Activated B cell treated with CpG ODN at 0.5 μM for 24 hours (primary cell): ENCODE measurements at regions of chr3 and their contacts with region 1.

Region 1: GRCh38 chr3:154095832-154096421 is 25.3 kb upstream of the ARHGEF26 start:
- DNase-seq: no peak
- ATAC-seq: no peak
- H3K4me3 Mint-ChIP-seq: no peak overlapping the region
- H3K27ac Mint-ChIP-seq: no peak overlapping the region
- H3K4me1 Mint-ChIP-seq: no peaks in the 10 kb centered on the region
- H3K27me3 Mint-ChIP-seq: no peaks in the 10 kb centered on the region
- CTCF ChIP-seq: no peak

Region 2: DNA sequence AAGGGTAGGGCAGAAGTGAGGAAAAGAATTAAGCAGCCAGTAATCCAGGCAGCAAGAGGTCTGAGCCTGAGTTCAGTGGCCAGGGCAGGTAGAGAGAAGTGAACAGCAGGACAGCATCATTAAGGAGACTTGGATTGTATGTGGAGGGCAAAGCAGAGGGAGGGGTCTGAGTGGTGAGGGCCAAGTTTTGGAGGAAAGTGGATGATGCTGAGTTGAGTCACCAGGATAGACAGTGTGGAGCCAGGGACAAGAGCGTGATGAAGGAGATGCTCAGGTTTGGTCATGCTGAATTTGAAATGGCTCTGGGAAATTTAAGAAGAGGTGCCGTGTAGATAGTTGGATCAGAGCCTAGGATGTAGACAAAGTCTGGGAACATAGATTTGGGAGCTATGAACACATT is 118.4 kb after region 1 on chr3:
- CTCF ChIA-PET with region 1: no interaction called
- POLR2A ChIA-PET with region 1: no interaction called
- intact Hi-C with region 1: no loop called
- DNase-seq: no peak
- ATAC-seq: no peak
- H3K4me3 Mint-ChIP-seq: no peak overlapping the region
- H3K27ac Mint-ChIP-seq: no peak overlapping the region
- H3K4me1 Mint-ChIP-seq: no peaks in the 10 kb centered on the region
- H3K27me3 Mint-ChIP-seq: no peaks in the 10 kb centered on the region
- CTCF ChIP-seq: no peak

Region 3: GRCh38 chr3:154252759-154253638 is 157.1 kb after region 1 on chr3:
- CTCF ChIA-PET with region 1: no interaction called
- POLR2A ChIA-PET with region 1: no interaction called
- intact Hi-C with region 1: loop called (anchors 1 kb)
- DNase-seq: peak; percentile 47
- ATAC-seq: peak; percentile 79
- H3K4me3 Mint-ChIP-seq: no peak overlapping the region
- H3K27ac Mint-ChIP-seq: no peak overlapping the region
- H3K4me1 Mint-ChIP-seq: peaks cover 3% of the 10 kb centered on the region
- H3K27me3 Mint-ChIP-seq: no peaks in the 10 kb centered on the region
- CTCF ChIP-seq: peak; percentile 64